ENCODE measurements at regions of chr16 and their contacts with region 1.

Region 1: GRCh38 chr16:88437373-88437964 is 15.6 kb upstream of the ZFPM1 start:
- DNase-seq: peak; percentile 93
- ATAC-seq: peak; percentile 84
- H3K4me3 Mint-ChIP-seq: no peak overlapping the region
- H3K27ac Mint-ChIP-seq: no peak overlapping the region
- H3K4me1 Mint-ChIP-seq: no peaks in the 10 kb centered on the region
- H3K27me3 Mint-ChIP-seq: no peaks in the 10 kb centered on the region
- CTCF ChIP-seq: peak; percentile 93

Region 2: DNA sequence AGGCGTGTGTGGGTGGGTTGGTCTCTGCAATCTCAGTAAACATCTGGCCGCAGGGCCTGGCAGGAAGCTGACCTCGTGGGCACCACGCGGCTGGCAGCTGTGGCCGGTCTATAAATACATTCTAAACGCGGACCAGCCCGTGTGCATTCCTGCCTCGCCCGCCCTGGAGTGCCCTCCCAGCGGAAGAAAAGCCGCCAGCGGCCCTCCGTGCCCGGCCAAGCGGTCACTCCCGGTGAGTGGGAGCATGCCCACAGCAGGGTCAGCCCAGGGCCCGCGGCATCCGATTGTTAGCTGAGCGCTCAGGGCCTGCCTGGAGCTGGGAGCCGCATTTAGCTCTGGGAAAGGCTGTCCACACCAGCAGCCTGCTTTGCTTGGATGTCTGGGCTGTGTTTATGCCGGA is 44.4 kb before region 1 on chr16:
- CTCF ChIA-PET with region 1: interaction called, 11 read pairs
- POLR2A ChIA-PET with region 1: no interaction called
- DNase-seq: no peak
- ATAC-seq: no peak
- H3K4me3 Mint-ChIP-seq: no peak overlapping the region
- H3K27ac Mint-ChIP-seq: no peak overlapping the region
- H3K4me1 Mint-ChIP-seq: no peaks in the 10 kb centered on the region
- H3K27me3 Mint-ChIP-seq: no peaks in the 10 kb centered on the region; the same call in 1 of the 2 replicates
- CTCF ChIP-seq: no peak

Region 3: DNA sequence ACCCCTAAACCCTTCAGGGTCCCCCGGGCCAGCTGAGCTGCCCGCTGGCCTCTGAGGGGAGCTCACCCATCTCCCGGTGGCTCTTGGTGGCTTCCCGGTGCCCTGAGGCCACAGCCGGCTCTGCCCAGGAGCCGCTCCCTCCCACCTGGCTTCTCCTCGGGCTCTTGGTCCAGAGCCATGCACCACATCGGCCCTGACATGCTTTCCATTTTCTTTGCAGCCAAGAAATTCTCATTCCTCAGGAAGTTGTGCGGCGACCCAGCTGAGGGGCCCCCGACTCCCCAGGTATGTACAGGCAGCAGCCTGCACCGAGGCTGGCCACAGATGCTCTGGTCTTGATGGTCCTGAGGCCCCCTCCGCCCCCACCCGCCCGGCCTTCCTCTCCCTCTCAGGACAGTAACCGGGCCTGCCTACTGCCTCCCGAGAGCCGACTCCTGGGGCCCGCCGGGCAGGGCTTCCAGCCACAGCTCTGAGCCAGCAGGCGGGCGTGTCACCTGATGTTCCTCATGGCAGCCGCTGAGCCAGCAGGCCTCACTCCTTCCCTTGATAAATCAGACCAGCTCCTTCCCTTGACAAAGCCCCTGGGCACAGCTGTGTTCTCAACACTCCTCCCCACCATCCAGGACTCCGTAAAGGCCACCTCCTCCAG is 12.8 kb before region 1 on chr16:
- CTCF ChIA-PET with region 1: interaction called, 30 read pairs
- POLR2A ChIA-PET with region 1: no interaction called
- DNase-seq: no peak
- ATAC-seq: no peak
- H3K4me3 Mint-ChIP-seq: no peak overlapping the region
- H3K27ac Mint-ChIP-seq: no peak overlapping the region
- H3K4me1 Mint-ChIP-seq: no peaks in the 10 kb centered on the region
- H3K27me3 Mint-ChIP-seq: peaks cover under 1% of the 10 kb centered on the region
- CTCF ChIP-seq: no peak

Region 4: DNA sequence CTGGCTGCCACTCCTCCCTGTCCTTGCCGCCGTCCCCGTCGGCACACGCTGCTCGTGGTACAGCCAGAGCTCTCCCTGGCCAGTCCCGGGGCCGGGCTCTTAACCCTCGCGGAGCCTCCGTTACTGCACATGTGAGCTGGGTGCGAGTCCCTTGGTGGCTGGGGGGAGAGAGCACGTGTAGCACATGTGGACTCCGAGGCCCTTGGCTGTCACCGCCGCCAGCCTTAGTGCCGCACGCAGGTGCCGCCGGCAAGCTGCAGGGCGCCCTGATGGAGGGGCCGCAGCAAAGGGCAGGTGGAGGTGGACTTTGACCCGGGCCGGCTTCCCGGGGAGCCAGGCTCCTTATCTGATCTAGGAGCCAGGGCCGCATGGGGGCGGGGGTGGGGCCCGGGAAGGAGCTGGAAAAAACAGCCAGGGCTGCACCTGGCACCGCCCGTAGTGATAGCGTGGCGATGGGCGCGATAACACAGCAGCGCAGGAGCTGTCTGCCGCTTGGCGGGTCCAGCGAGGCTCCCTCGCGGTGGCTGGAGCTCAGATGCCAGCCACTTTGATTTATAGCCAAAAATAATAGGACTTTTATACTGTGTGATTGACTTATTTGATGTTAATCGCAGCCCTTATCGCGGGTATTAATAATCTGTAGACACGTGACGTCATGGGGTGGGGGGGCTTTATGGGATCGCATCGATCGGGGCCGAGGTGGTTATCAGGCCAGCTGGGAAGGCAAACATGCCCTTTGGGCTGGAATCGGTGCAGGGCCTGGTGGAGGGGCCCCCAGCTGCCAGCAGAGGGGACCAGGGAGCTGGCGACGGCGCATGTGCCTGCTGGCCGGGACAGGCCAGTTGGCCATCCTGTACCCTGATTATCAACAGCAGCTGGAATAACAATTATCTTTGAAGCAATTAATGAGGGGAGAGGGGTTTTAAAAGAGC is 50.7 kb after region 1 on chr16:
- CTCF ChIA-PET with region 1: interaction called, 22 read pairs
- POLR2A ChIA-PET with region 1: no interaction called
- DNase-seq: no peak
- ATAC-seq: no peak
- H3K4me3 Mint-ChIP-seq: no peak overlapping the region
- H3K27ac Mint-ChIP-seq: peak overlapping the region; percentile 65; the same call in 1 of the 2 replicates
- H3K4me1 Mint-ChIP-seq: peaks cover 3% of the 10 kb centered on the region; the same call in 1 of the 2 replicates
- H3K27me3 Mint-ChIP-seq: no peaks in the 10 kb centered on the region
- CTCF ChIP-seq: no peak

Region 5: GRCh38 chr16:88539652-88540345 is 102.3 kb after region 1 on chr16:
- CTCF ChIA-PET with region 1: interaction called, 14 read pairs
- POLR2A ChIA-PET with region 1: no interaction called
- DNase-seq: no peak
- ATAC-seq: peak; percentile 36; the same call in 1 of the 2 replicates
- H3K4me3 Mint-ChIP-seq: no peak overlapping the region
- H3K27ac Mint-ChIP-seq: no peak overlapping the region
- H3K4me1 Mint-ChIP-seq: peaks cover 12% of the 10 kb centered on the region; the same call in 1 of the 2 replicates
- H3K27me3 Mint-ChIP-seq: peaks cover 37% of the 10 kb centered on the region
- CTCF ChIP-seq: no peak